Mammary epithelial cell (primary cell): ENCODE measurements at regions of chr11 and their contacts with region 1.

Region 1: DNA sequence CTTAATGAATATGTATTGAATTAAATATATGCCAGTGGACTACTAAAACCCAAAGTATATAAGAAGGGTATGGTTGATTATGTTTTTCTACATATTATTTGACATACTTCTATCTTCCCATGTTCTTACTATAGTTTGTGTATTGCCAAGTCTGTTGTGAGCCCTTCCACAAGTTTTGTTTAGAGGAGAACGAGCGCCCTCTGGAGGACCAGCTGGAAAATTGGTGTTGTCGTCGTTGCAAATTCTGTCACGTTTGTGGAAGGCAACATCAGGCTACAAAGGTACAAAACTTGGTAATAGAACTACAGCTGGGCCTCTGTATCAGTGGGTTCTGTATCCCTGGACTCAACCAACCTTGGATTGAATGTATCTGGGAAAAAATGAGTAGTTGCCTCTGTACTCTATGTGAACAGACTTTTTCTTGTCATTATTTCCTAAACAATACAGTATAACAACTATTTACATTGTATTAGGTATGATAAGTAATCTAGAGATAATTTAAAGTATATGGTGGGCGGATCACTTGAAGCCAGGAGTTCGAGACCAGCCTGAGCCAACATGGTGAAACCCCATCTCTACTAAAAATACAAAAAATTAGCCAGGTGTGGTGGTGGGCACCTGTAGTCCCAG is 38.7 kb upstream of the TTC36 start:
- DNase-seq: peak; percentile 47
- H3K4me3 ChIP-seq: no peak overlapping the region
- H3K27ac ChIP-seq: no peak overlapping the region
- H3K4me1 ChIP-seq: no peaks in the 10 kb centered on the region
- H3K27me3 ChIP-seq: no peaks in the 10 kb centered on the region
- CTCF ChIP-seq: peak; percentile 83 to 91

Region 2: GRCh38 chr11:118295834-118296454 is 192.7 kb before region 1 on chr11:
- CTCF ChIA-PET with region 1: no interaction called
- dilution Hi-C with region 1: no loop called
- in situ Hi-C with region 1: no loop called
- intact Hi-C with region 1: loop called (anchors 1 kb)
- DNase-seq: peak; percentile 74
- H3K4me3 ChIP-seq: no peak overlapping the region
- H3K27ac ChIP-seq: no peak overlapping the region
- H3K4me1 ChIP-seq: peaks cover 14% of the 10 kb centered on the region
- H3K27me3 ChIP-seq: no peaks in the 10 kb centered on the region
- CTCF ChIP-seq: peak; percentile 77 to 87

Region 3: GRCh38 chr11:118435893-118436624 is 52.5 kb before region 1 on chr11 and contains the start of gene KMT2A:
- CTCF ChIA-PET with region 1: no interaction called
- dilution Hi-C with region 1: no loop called
- in situ Hi-C with region 1: no loop called
- intact Hi-C with region 1: loop called (anchors 1 kb)
- DNase-seq: peak; percentile 99
- H3K4me3 ChIP-seq: peak within 1 kb of the TSS; percentile 84 to 95 (median 88)
- H3K27ac ChIP-seq: peak within 1 kb of the TSS; percentile 42
- H3K4me1 ChIP-seq: peaks cover 25% of the 10 kb centered on the region
- H3K27me3 ChIP-seq: no peaks in the 10 kb centered on the region
- CTCF ChIP-seq: no peak
- total RNA-seq, gene KMT2A: 35.7 to 55.2 TPM